ENCODE measurements at regions of chr22 and their contacts with region 1.

Region 1: GRCh38 chr22:38051900-38052862 is 5.0 kb upstream of the PICK1 start:
- DNase-seq: peak; percentile 90 to 94 (median 92)
- H3K4me3 ChIP-seq: no peak overlapping the region
- H3K27ac ChIP-seq: no peak overlapping the region
- H3K4me1 ChIP-seq: peaks cover 0 to 5% (median 0%) of the 10 kb centered on the region in 3 donors
- H3K27me3 ChIP-seq: no peaks in the 10 kb centered on the region
- CTCF ChIP-seq: peak; percentile 92

Region 2: DNA sequence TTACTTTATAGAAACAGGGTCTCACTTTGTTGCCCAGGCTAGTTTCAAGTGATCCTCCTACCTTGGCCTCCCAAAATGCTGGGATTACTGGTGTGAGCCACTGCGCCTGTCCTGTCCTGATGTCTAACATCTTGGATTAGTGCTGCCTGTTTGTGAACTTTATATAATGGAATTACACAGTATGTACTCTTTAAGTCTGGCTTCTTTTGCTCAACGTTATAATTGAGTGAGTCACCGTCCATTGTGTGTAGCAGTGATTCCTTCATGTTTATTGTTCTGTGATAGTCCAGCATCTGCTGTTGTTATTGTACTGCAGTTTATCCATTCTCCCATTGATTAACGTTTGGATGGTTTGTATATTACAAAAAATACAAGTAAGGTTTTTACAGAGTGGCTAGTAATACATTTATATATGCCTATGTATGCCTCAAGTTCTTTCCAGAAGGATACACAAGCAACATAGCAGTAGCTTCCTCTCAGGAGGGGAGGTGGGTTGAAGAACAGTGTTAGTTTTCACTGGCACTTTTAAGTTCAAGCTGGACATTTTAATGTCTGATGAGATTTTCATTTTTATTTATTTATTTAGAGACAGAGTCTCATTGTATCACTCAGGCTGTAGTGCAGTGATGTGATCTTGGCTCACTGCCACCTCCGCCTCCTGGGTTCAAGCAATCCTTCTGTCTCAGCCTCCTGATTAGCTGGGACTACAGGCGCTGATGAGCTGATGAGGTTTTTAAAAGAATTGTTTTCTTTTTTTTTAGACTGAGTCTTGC is 171.3 kb before region 1 on chr22:
- intact Hi-C with region 1: no loop called
- DNase-seq: peak in 1 of 5 donors; percentile 12
- H3K4me3 ChIP-seq: no peak overlapping the region
- H3K27ac ChIP-seq: no peak overlapping the region
- H3K4me1 ChIP-seq: no peaks in the 10 kb centered on the region
- H3K27me3 ChIP-seq: no peaks in the 10 kb centered on the region
- CTCF ChIP-seq: no peak

Region 3: DNA sequence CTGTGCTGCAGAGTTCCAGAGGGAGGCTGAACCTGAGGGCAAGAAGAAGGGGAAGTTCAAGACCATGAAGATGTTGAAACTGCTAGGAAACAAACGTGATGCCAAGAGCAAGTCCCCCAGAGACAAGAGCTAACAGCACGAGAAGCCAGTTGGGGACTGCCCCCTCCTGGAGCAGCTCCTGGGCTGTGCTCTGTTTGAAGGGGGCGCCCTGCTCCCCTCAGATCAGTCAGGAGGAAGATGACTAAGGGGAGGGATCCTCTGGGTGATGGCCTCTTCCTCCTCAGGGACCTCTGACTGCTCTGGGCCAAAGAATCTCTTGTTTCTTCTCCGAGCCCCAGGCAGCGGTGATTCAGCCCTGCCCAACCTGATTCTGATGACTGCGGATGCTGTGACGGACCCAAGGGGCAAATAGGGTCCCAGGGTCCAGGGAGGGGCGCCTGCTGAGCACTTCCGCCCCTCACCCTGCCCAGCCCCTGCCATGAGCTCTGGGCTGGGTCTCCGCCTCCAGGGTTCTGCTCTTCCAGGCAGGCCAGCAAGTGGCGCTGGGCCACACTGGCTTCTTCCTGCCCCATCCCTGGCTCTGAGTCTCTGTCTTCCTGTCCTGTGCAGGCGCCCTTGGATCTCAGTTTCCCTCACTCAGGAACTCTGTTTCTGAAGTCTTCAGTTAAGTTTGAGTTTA is 111.3 kb before region 1 on chr22:
- intact Hi-C with region 1: no loop called
- DNase-seq: no peak
- H3K4me3 ChIP-seq: no peak overlapping the region
- H3K27ac ChIP-seq: no peak overlapping the region
- H3K4me1 ChIP-seq: peaks cover 0 to 10% (median 6%) of the 10 kb centered on the region in 3 donors
- H3K27me3 ChIP-seq: no peaks in the 10 kb centered on the region
- CTCF ChIP-seq: no peak

Region 4: GRCh38 chr22:38148245-38148644 is 96.1 kb after region 1 on chr22:
- intact Hi-C with region 1: no loop called
- DNase-seq: peak in 2 of 5 donors; percentile 4 to 5
- H3K4me3 ChIP-seq: no peak overlapping the region
- H3K27ac ChIP-seq: no peak overlapping the region
- H3K4me1 ChIP-seq: peaks cover 0 to 5% (median 3%) of the 10 kb centered on the region in 3 donors
- H3K27me3 ChIP-seq: no peaks in the 10 kb centered on the region
- CTCF ChIP-seq: no peak

Region 5: GRCh38 chr22:38230108-38230825 is 178.1 kb after region 1 on chr22:
- intact Hi-C with region 1: no loop called
- DNase-seq: peak in 2 of 5 donors; percentile 36 to 62
- H3K4me3 ChIP-seq: no peak overlapping the region
- H3K27ac ChIP-seq: no peak overlapping the region
- H3K4me1 ChIP-seq: peaks cover 0 to 2% (median 0%) of the 10 kb centered on the region in 3 donors
- H3K27me3 ChIP-seq: no peaks in the 10 kb centered on the region
- CTCF ChIP-seq: peak; percentile 42

Region 6: GRCh38 chr22:38569972-38570778 is 518.0 kb after region 1 on chr22 and contains the start of gene DMC1:
- intact Hi-C with region 1: loop called (anchors 5 kb)
- DNase-seq: peak; percentile 97 to 99 (median 98)
- H3K4me3 ChIP-seq: peak within 1 kb of the TSS; percentile 77 to 80 (median 79)
- H3K27ac ChIP-seq: peak within 1 kb of the TSS; percentile 38 to 73
- H3K4me1 ChIP-seq: peaks cover 0 to 2% (median 0%) of the 10 kb centered on the region in 3 donors
- H3K27me3 ChIP-seq: no peaks in the 10 kb centered on the region
- CTCF ChIP-seq: no peak
- total RNA-seq, gene DMC1: 0.66 TPM

Measured in kidney (tissue), 22 donors.